Posterior vena cava (tissue), 2 donors: ENCODE measurements at regions of chr19 and their contacts with region 1.

Region 1: GRCh38 chr19:47643283-47643682 is 34.3 kb downstream of the BICRA start:
- DNase-seq: no peak

Region 2: GRCh38 chr19:47507012-47507411 is 136.3 kb before region 1 on chr19:
- intact Hi-C with region 1: no loop called
- DNase-seq: no peak

Region 3: DNA sequence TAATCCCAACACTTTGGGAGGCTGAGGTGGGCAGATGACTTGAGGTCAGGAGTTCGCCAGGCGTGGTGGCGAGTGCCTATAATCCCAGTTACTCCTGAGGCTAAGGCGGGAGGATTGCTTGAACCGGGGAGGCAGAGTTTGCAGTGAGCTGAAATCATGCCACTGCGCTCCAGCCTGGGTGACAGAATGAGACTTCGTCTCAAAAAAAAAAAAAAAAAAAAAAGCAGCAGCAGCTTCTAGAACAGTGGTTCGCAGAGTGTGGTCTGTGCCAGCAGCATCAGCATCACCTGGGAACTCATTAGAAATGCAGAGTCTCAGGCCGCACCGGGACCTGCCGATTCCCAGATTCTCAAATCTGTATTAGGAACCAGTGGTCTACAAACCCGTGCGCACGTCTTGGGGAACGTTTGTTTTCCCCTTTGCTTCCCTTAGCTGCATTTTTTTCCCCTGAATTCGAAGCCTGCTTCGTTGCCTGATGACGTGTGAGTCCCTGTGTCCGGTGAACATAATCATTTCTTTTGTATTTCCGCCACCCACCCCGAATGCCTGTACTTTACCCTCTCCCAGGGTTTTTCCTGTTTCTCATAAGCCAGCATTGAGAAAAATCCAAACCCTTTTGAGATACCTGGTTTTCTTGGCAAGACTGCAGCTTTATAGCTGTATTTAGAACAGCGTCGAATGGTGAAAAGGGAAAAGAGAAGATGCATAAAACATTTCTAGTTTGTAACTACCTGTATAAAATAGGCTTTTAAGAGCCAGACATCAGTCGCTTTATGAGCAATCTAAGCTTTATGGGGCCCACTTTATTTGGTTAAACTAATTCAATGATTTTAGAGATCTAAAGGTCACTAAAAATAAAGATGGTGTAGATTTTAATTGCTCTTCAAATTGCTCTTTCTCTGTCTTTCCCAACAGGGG is 15.4 kb after region 1 on chr19:
- intact Hi-C with region 1: loop called in 1 of 2 experiments (anchors 1 kb)
- DNase-seq: no peak